Activated T-helper 2 cell treated with anti-CD3 and anti-CD28 coated beads, Interferon-gamma antibody, Interleukin-2, Interleukin-4, amounts not matched to agents 10 μg/mL and 5 μg/mL and 100 μg/mL, durations not matched to agents 14 hours and 24 hours and 36 hours (primary cell): ENCODE measurements at regions of chr9 and their contacts with region 1.

Region 1: GRCh38 chr9:74379718-74380117 is 117.4 kb upstream of the RORB start:
- DNase-seq: peak; percentile 9
- H3K4me3 Mint-ChIP-seq: no peak overlapping the region
- H3K27ac Mint-ChIP-seq: no peak overlapping the region
- H3K4me1 Mint-ChIP-seq: peaks cover 6% of the 10 kb centered on the region
- H3K27me3 Mint-ChIP-seq: peaks cover 2% of the 10 kb centered on the region

Region 2: DNA sequence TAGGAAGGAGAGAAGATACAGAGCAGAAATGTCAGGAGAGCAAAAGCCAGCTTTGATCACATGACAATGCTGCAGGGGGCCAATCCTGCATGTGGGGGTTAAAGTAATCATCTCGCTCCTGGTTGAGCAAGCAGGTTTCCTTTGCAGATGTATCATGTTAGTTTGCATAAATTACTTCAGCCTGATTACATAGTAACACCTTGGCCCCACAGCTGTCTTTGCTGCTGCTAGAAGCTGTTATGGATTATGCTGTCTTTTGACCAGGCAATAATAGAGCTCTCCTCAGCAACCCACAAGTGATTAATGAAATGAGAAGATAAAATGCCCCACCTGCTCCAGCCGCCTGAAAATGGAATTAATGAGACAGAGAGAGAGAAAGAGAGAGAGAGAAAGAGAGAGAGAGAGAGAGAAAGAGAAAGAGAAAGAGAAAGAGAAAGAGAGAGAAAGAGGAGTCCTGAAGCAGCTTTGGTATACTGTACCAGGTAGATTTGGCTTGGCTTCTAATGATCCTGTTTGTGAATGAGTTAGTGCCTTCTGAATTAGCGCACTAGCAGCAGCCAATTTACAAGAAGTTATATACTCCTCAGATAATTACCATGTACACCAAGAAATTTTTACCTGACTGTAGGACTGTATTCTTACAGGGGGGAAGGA is 56.9 kb before region 1 on chr9:
- intact Hi-C with region 1: loop called (anchors 10 kb)
- DNase-seq: peak; percentile 8
- H3K4me3 Mint-ChIP-seq: peak overlapping the region; percentile 75
- H3K27ac Mint-ChIP-seq: peak overlapping the region; percentile 47
- H3K4me1 Mint-ChIP-seq: peaks cover 9% of the 10 kb centered on the region
- H3K27me3 Mint-ChIP-seq: peaks cover 6% of the 10 kb centered on the region

Region 3: DNA sequence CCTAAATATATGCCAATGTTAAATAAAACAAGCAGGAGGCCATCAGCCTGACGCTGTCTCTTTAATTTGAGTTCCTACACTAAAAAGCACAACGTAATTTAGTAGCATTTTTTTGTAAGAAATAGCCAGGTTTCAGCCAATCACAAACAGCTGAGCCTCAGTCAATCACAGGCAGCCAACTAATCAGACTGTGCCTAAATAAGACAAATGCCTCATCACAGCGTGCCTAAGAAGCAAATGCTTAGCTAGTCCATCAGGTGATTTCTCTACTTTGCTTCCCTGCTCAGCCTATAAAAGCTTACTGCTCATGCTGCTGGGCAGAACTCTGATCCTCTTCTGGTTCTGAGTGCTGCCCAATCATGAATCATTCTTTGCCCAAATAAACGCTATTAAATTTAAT is 79.1 kb after region 1 on chr9:
- intact Hi-C with region 1: no loop called
- DNase-seq: no peak
- H3K4me3 Mint-ChIP-seq: no peak overlapping the region
- H3K27ac Mint-ChIP-seq: no peak overlapping the region
- H3K4me1 Mint-ChIP-seq: no peaks in the 10 kb centered on the region
- H3K27me3 Mint-ChIP-seq: no peaks in the 10 kb centered on the region

Region 4: GRCh38 chr9:74960563-74960962 is 580.8 kb after region 1 on chr9:
- intact Hi-C with region 1: no loop called
- DNase-seq: no peak
- H3K4me3 Mint-ChIP-seq: no peak overlapping the region
- H3K27ac Mint-ChIP-seq: no peak overlapping the region
- H3K4me1 Mint-ChIP-seq: peaks cover 8% of the 10 kb centered on the region
- H3K27me3 Mint-ChIP-seq: no peaks in the 10 kb centered on the region